SK-N-SH (cell line): ENCODE measurements at regions of chr4 and their contacts with region 1.

Region 1: GRCh38 chr4:52234561-52235440 is 183.7 kb downstream of the SPATA18 start:
- DNase-seq: peak; percentile 38
- H3K4me3 ChIP-seq: no peak overlapping the region; a peak in 2 of 4 replicates
- H3K27ac ChIP-seq: no peak overlapping the region; a peak in 1 of 4 replicates
- H3K4me1 ChIP-seq: no peaks in the 10 kb centered on the region; a peak in 1 of 4 replicates
- H3K27me3 ChIP-seq: no peaks in the 10 kb centered on the region
- CTCF ChIP-seq: peak; percentile 56
- EP300 ChIP-seq: no peak
- RAD21 ChIP-seq: peak; percentile 95

Region 2: GRCh38 chr4:52192721-52193135 is 42.1 kb before region 1 on chr4:
- CTCF ChIA-PET with region 1: no interaction called
- POLR2A ChIA-PET with region 1: no interaction called
- DNase-seq: no peak
- H3K4me3 ChIP-seq: no peak overlapping the region
- H3K27ac ChIP-seq: no peak overlapping the region
- H3K4me1 ChIP-seq: no peaks in the 10 kb centered on the region
- H3K27me3 ChIP-seq: no peaks in the 10 kb centered on the region
- CTCF ChIP-seq: no peak
- EP300 ChIP-seq: no peak
- RAD21 ChIP-seq: no peak

Region 3: GRCh38 chr4:52248820-52249219 is 14.0 kb after region 1 on chr4:
- CTCF ChIA-PET with region 1: interaction called, 11 read pairs
- POLR2A ChIA-PET with region 1: no interaction called
- DNase-seq: no peak
- H3K4me3 ChIP-seq: no peak overlapping the region
- H3K27ac ChIP-seq: no peak overlapping the region
- H3K4me1 ChIP-seq: peaks cover 0 to 9% of the 10 kb centered on the region in 2 experiments; a peak in 2 of 4 replicates
- H3K27me3 ChIP-seq: no peaks in the 10 kb centered on the region
- CTCF ChIP-seq: no peak
- EP300 ChIP-seq: no peak
- RAD21 ChIP-seq: no peak

Region 4: GRCh38 chr4:52368895-52369294 is 134.1 kb after region 1 on chr4:
- CTCF ChIA-PET with region 1: interaction called, 25 read pairs
- POLR2A ChIA-PET with region 1: no interaction called
- DNase-seq: no peak
- H3K4me3 ChIP-seq: no peak overlapping the region
- H3K27ac ChIP-seq: no peak overlapping the region
- H3K4me1 ChIP-seq: peaks cover 0 to 12% of the 10 kb centered on the region in 2 experiments; a peak in 2 of 4 replicates
- H3K27me3 ChIP-seq: no peaks in the 10 kb centered on the region
- CTCF ChIP-seq: no peak
- EP300 ChIP-seq: no peak
- RAD21 ChIP-seq: no peak

Region 5: GRCh38 chr4:52376132-52376704 is 141.4 kb after region 1 on chr4:
- CTCF ChIA-PET with region 1: interaction called, 25 read pairs
- POLR2A ChIA-PET with region 1: no interaction called
- DNase-seq: peak; percentile 41
- H3K4me3 ChIP-seq: peak overlapping the region in 1 of 2 experiments; percentile 32; a peak in 1 of 4 replicates
- H3K27ac ChIP-seq: no peak overlapping the region
- H3K4me1 ChIP-seq: peaks cover 0 to 3% of the 10 kb centered on the region in 2 experiments; a peak in 1 of 4 replicates
- H3K27me3 ChIP-seq: no peaks in the 10 kb centered on the region
- CTCF ChIP-seq: peak; percentile 80
- EP300 ChIP-seq: no peak
- RAD21 ChIP-seq: peak; percentile 86